ENCODE measurements at regions of chr3 and their contacts with region 1.

Region 1: GRCh38 chr3:52907497-52907896 is 10.1 kb upstream of the STIMATE start:
- DNase-seq: no peak
- H3K4me3 ChIP-seq: no peak overlapping the region
- H3K27ac ChIP-seq: no peak overlapping the region
- H3K4me1 ChIP-seq: no peaks in the 10 kb centered on the region
- H3K27me3 ChIP-seq: no peaks in the 10 kb centered on the region
- CTCF ChIP-seq: no peak

Region 2: DNA sequence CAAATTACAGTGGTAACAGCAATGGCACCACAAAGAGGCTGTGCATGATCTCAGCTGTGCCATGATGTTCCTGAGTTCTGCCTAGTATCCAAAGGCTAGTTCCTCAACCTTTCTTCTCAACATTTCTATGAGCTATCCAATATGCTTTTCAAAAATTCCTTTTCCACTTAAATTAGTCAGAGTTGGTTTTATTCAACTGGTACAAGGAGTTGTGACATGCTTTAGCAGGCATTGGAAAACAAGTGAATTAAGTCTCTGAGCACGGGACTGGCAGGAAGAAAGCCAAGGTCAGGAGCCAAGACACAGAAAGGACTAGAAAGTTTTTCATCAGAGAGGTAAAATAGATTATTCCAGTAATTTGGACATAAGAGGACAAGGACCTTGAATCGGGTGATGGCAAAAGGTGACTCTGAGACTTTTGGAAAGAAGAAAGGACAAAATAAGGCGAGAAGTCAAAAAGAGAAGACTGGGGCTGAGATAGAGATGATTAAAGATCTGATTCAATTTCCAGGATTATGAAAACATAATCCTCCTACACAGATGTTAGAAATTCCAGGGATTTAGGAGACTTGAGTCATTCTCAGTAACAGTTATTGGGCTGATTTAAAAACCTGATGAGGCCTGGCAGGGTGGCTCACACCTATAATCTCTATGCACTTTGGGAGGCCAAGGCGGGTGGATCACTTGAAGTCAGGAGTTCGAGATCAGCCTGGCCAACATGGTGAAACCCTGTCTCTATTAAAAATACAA is 257.9 kb before region 1 on chr3:
- CTCF ChIA-PET with region 1: no interaction called
- POLR2A ChIA-PET with region 1: no interaction called
- intact Hi-C with region 1: no loop called
- DNase-seq: no peak
- H3K4me3 ChIP-seq: no peak overlapping the region
- H3K27ac ChIP-seq: no peak overlapping the region
- H3K4me1 ChIP-seq: no peaks in the 10 kb centered on the region
- H3K27me3 ChIP-seq: no peaks in the 10 kb centered on the region
- CTCF ChIP-seq: no peak

Region 3: DNA sequence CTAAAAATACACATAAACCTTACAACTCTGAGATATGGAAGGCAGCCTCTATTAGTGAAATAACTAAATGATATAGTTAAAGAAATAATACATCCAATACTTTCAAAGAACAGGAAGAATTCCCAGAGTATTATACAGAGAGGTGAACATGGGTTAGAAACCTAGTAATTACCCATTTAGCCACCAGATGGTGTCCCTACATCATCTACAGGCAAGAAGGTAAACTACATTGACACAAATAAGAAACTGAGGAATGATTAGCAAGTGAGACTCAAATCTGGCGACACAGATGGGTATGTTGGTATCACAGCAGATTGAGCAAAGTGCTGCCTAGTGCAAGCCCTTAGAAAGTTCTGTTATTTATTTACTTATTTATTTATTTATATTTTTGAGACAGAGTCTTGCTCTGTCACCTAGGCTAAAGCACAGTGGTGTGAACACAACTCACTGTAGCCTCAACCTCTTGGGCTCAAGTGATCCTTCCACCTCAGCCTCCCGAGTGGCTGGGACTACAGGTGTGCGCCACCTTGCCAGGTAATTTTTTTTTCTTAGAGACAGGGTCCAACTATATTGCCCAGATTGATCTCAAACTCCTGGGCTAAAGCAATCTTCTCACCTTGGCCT is 165.0 kb before region 1 on chr3:
- CTCF ChIA-PET with region 1: no interaction called
- POLR2A ChIA-PET with region 1: no interaction called
- intact Hi-C with region 1: no loop called
- DNase-seq: peak in 1 of 2 experiments; percentile 0
- H3K4me3 ChIP-seq: no peak overlapping the region
- H3K27ac ChIP-seq: no peak overlapping the region
- H3K4me1 ChIP-seq: no peaks in the 10 kb centered on the region
- H3K27me3 ChIP-seq: no peaks in the 10 kb centered on the region
- CTCF ChIP-seq: peak; percentile 64

Region 4: GRCh38 chr3:52779011-52779836 is 128.3 kb before region 1 on chr3:
- CTCF ChIA-PET with region 1: interaction called, 16 read pairs
- POLR2A ChIA-PET with region 1: no interaction called
- intact Hi-C with region 1: no loop called
- DNase-seq: no peak
- H3K4me3 ChIP-seq: no peak overlapping the region
- H3K27ac ChIP-seq: no peak overlapping the region
- H3K4me1 ChIP-seq: no peaks in the 10 kb centered on the region; the same call in 1 of the 2 replicates
- H3K27me3 ChIP-seq: peaks cover 24% of the 10 kb centered on the region
- CTCF ChIP-seq: no peak

Region 5: GRCh38 chr3:52860424-52860768 is 47.1 kb before region 1 on chr3:
- CTCF ChIA-PET with region 1: no interaction called
- POLR2A ChIA-PET with region 1: no interaction called
- intact Hi-C with region 1: no loop called
- DNase-seq: no peak
- H3K4me3 ChIP-seq: no peak overlapping the region
- H3K27ac ChIP-seq: no peak overlapping the region
- H3K4me1 ChIP-seq: no peaks in the 10 kb centered on the region
- H3K27me3 ChIP-seq: no peaks in the 10 kb centered on the region
- CTCF ChIP-seq: no peak

Region 6: DNA sequence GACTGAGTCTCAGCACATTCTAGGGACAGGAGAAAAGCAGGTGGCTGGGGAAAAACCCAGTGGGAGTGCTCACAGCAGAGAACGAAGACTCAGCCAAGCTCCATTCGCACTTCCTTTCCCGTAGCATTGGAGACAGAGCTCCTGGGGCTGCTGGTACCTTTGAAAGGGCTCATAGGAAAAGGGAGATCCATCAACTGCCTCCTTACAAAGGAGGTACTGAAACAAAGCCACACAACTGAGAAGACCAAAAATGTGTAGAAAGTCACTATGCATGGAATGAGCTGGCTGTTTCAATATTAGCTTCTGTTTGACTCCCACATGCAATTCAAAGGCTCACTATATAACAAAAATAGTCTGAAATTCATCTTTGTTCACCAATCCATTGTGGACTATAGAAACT is 27.0 kb before region 1 on chr3:
- CTCF ChIA-PET with region 1: no interaction called
- POLR2A ChIA-PET with region 1: no interaction called
- intact Hi-C with region 1: no loop called
- DNase-seq: no peak
- H3K4me3 ChIP-seq: no peak overlapping the region
- H3K27ac ChIP-seq: no peak overlapping the region
- H3K4me1 ChIP-seq: no peaks in the 10 kb centered on the region
- H3K27me3 ChIP-seq: no peaks in the 10 kb centered on the region
- CTCF ChIP-seq: no peak

Region 7: GRCh38 chr3:52892625-52893311 is 14.7 kb before region 1 on chr3:
- CTCF ChIA-PET with region 1: interaction called, 10 read pairs
- POLR2A ChIA-PET with region 1: no interaction called
- intact Hi-C with region 1: no loop called
- DNase-seq: no peak
- H3K4me3 ChIP-seq: no peak overlapping the region
- H3K27ac ChIP-seq: no peak overlapping the region
- H3K4me1 ChIP-seq: 0 out of 2 replicates have a peak, but pooled peaks cover 1% of the 10 kb centered on the region
- H3K27me3 ChIP-seq: no peaks in the 10 kb centered on the region
- CTCF ChIP-seq: no peak

Region 8: DNA sequence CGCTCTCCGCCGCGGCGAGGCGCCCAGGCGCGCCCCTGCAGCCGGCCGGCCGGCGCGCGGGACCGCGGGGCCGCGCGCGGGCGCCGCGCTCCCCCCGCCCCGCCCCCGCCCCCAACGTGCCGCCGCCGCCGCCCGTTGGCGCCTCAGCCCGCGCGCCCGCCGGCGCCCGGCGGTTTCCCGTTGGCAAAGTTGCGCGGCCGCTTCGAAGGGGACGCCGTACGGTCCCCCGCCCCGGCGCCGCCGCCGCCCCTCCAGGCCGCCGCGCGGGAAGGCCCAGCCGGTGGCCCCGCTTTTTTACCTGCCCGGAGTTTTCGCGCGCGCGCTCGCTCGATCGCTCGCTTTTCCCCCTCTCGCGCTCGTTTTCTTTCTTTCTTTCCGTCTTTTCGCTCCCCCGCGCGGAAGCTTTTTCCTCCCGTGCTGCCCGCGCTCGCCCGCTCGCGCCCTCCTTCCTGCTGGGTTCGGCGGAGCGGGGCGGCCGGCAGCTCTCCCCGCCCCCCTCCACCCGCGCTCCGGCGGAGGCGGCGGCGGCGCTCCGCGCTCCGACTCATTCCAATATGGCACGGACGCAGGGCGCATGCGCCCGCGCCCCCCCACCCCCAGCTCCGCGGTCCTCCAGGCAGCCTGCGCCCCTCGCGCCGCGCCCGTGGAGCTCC is 138.1 kb after region 1 on chr3 and contains the start of gene SFMBT1:
- CTCF ChIA-PET with region 1: no interaction called
- POLR2A ChIA-PET with region 1: interaction called, 11 read pairs
- intact Hi-C with region 1: no loop called
- DNase-seq: peak in 1 of 2 experiments; percentile 54
- H3K4me3 ChIP-seq: peak within 1 kb of the TSS; percentile 84
- H3K27ac ChIP-seq: peak within 1 kb of the TSS; percentile 37; the same call in 1 of the 2 replicates
- H3K4me1 ChIP-seq: peaks cover 22% of the 10 kb centered on the region
- H3K27me3 ChIP-seq: no peaks in the 10 kb centered on the region
- CTCF ChIP-seq: no peak
- total RNA-seq, gene SFMBT1: 14.3 and 15.2 TPM in 2 replicates

Measured in PC-9 (cell line).